Naive thymus-derived CD4-positive, alpha-beta T cell (primary cell): ENCODE measurements at regions of chr7 and their contacts with region 1.

Region 1: DNA sequence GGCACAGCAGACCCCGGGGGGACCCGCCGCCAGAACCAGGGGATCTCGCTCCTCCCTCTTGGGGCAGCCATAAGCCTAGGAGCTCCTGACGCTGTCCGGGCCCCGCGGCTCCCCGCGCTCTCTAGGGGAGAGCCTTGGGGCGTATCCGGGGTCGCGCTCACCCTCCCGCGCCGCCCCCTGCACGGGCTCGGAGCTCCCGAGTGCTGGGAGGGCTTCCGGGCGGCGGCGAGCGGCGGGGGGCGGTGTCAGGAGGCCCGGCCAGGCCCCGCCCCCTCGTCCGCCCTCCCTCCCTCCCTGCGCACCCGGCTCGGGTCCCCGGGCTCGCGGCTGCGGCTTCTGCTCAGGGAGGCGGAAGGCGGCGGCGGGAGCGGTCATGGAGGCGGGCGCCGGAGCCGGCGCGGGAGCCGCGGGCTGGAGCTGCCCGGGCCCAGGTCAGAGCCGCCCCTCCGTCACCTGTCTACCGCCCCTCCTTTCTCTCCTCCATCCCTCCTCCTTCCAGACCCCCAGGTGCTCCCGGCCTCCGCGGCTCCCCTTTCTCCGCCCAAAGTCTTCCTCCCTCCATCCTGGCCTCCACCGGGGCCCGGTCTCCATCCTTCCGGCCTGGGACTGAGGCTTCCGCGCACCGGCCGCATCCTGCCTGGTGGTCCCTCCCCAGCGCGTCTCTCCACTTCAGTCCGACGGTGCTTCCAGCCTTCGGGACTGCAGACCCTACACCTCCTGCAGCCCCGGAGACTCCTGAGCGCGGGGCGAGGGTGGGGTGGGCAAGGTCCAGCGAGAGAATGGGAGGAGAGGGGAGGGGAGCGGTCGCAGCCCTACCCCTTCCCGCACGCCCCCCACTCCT is 427 bp upstream of the CCDC136 start:
- DNase-seq: peak; percentile 67 to 82 (median 76)
- ATAC-seq: peak; percentile 95
- H3K4me3 ChIP-seq: peak overlapping the region; percentile 64
- H3K4me3 Mint-ChIP-seq: peak overlapping the region; percentile 62 to 90 (median 80)
- H3K27ac ChIP-seq: peak overlapping the region; percentile 68
- H3K27ac Mint-ChIP-seq: peak overlapping the region in 4 of 9 donors; percentile 19 to 80 (median 61)
- H3K4me1 ChIP-seq: peaks cover 0 to 3% of the 10 kb centered on the region in 2 donors
- H3K4me1 Mint-ChIP-seq: peaks cover 6 to 29% (median 12%) of the 10 kb centered on the region in 7 donors
- H3K27me3 ChIP-seq: no peaks in the 10 kb centered on the region
- H3K27me3 Mint-ChIP-seq: peaks cover 0 to 36% (median 0%) of the 10 kb centered on the region in 5 donors

Region 2: GRCh38 chr7:127905491-127906330 is 885.6 kb before region 1 on chr7:
- CTCF ChIA-PET with region 1: no interaction called
- POLR2A ChIA-PET with region 1: no interaction called
- intact Hi-C with region 1: no loop called
- DNase-seq: no peak
- ATAC-seq: no peak
- H3K4me3 ChIP-seq: no peak overlapping the region
- H3K4me3 Mint-ChIP-seq: peak overlapping the region in 1 of 10 donors; percentile 3
- H3K27ac ChIP-seq: no peak overlapping the region
- H3K27ac Mint-ChIP-seq: peak overlapping the region in 1 of 9 donors; percentile 25
- H3K4me1 ChIP-seq: no peaks in the 10 kb centered on the region
- H3K4me1 Mint-ChIP-seq: peaks cover 12 to 51% (median 20%) of the 10 kb centered on the region in 7 donors
- H3K27me3 ChIP-seq: no peaks in the 10 kb centered on the region
- H3K27me3 Mint-ChIP-seq: no peaks in the 10 kb centered on the region

Region 3: DNA sequence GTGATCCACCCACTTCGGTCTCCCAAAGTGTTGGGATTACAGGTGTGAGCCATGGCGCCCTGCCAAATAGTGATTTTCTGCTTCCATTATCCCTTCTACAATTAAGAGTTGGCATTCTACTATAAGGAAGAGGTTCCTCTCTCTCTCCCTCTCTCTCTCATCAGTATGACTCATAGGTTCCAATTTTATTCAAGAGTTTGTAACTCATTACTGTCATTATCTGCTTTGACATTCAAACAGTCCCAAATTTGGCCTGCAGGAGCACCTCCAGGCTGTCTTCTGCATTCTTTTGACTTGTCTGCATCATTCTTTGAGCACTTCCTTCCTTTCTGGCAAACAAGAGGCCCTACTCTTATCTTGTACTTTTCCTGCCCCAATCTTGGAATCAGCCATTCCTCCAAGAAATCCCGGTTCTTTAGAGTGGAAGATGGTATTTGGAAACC is 85.4 kb before region 1 on chr7:
- CTCF ChIA-PET with region 1: no interaction called
- POLR2A ChIA-PET with region 1: no interaction called
- intact Hi-C with region 1: no loop called
- DNase-seq: no peak
- ATAC-seq: no peak
- H3K4me3 ChIP-seq: no peak overlapping the region
- H3K4me3 Mint-ChIP-seq: no peak overlapping the region
- H3K27ac ChIP-seq: no peak overlapping the region
- H3K27ac Mint-ChIP-seq: no peak overlapping the region
- H3K4me1 ChIP-seq: no peaks in the 10 kb centered on the region
- H3K4me1 Mint-ChIP-seq: peaks cover 0 to 2% (median 0%) of the 10 kb centered on the region in 7 donors
- H3K27me3 ChIP-seq: no peaks in the 10 kb centered on the region
- H3K27me3 Mint-ChIP-seq: peaks cover under 1 to 38% (median 7%) of the 10 kb centered on the region in 5 donors

Region 4: DNA sequence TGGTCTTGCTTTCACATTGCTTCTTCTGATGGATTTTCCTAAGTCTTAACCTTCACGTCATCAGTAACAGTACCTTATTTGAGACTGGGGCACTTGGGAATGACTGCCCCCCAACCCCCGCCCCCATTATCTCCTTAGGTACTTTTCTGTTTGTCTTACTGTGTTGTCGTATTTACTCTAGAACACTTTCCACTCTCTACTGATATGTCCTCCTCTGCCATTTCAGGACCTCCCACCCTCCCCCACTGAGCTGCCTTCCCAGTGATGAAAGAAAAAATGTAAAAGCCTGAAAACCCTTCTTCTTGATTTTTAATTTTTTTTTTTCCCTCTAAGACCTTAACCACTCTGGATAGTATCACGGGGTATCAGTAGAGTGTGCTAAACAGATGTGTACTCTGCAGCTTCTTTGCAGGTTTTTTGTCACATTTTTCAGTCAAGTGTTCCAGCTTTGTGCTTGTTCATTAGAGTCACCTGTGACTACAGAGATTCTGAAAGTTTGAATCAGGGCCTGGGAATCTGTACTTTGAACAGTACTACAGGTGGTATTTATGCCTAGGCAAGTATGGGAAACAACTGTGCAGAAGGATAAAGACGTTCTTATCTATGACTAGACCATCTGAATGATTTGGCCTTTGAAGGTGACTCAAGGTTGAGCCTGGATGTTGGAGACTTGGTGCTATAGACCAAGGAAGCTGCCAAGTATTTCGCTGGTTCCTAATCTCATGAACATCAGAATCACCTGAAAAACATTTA is 43.8 kb before region 1 on chr7:
- CTCF ChIA-PET with region 1: no interaction called
- POLR2A ChIA-PET with region 1: no interaction called
- intact Hi-C with region 1: no loop called
- DNase-seq: no peak
- ATAC-seq: no peak
- H3K4me3 ChIP-seq: no peak overlapping the region
- H3K4me3 Mint-ChIP-seq: no peak overlapping the region
- H3K27ac ChIP-seq: no peak overlapping the region
- H3K27ac Mint-ChIP-seq: no peak overlapping the region
- H3K4me1 ChIP-seq: no peaks in the 10 kb centered on the region
- H3K4me1 Mint-ChIP-seq: peaks cover 6 to 34% (median 29%) of the 10 kb centered on the region in 7 donors
- H3K27me3 ChIP-seq: no peaks in the 10 kb centered on the region
- H3K27me3 Mint-ChIP-seq: no peaks in the 10 kb centered on the region

Region 5: DNA sequence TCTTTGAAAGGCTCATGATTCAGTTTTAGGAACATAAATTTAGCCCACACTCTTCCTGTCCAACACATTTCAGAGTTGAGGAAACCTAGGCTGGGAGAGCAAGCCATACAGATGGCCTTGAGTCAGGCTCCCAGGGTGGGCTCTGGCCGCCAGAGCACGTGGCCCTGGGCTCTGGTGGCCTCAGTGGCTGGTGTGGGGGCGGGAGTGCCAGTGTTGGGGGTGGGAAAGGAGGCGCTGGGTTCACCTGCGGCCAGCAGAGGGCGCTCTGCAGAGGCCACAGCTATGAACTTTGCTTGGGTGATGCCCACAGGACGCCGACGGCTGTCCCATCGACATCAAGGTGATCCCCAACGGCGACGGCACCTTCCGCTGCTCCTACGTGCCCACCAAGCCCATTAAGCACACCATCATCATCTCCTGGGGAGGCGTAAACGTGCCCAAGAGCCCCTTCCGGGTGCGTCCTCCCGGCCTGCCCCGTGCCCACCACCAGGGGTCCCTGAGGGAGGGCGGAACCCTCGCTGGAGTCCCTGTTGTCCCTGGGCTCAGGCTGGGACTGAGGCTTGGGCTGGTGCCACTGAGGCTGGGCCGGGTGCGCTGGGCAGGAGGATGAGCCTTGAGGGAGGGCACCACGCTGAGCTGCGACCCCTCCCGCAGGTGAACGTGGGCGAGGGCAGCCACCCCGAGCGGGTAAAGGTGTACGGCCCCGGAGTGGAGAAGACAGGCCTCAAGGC is 50.7 kb after region 1 on chr7:
- CTCF ChIA-PET with region 1: no interaction called
- POLR2A ChIA-PET with region 1: no interaction called
- intact Hi-C with region 1: loop called in 1 of 2 experiments (anchors 5 kb)
- DNase-seq: peak in 8 of 9 donors; percentile 23 to 66 (median 48)
- ATAC-seq: peak; percentile 74
- H3K4me3 ChIP-seq: no peak overlapping the region
- H3K4me3 Mint-ChIP-seq: no peak overlapping the region
- H3K27ac ChIP-seq: no peak overlapping the region
- H3K27ac Mint-ChIP-seq: peak overlapping the region in 1 of 9 donors; percentile 25
- H3K4me1 ChIP-seq: no peaks in the 10 kb centered on the region
- H3K4me1 Mint-ChIP-seq: peaks cover 0 to 2% (median 0%) of the 10 kb centered on the region in 7 donors
- H3K27me3 ChIP-seq: no peaks in the 10 kb centered on the region
- H3K27me3 Mint-ChIP-seq: no peaks in the 10 kb centered on the region